ENCODE measurements at regions of chr4 and their contacts with region 1.

Region 1: DNA sequence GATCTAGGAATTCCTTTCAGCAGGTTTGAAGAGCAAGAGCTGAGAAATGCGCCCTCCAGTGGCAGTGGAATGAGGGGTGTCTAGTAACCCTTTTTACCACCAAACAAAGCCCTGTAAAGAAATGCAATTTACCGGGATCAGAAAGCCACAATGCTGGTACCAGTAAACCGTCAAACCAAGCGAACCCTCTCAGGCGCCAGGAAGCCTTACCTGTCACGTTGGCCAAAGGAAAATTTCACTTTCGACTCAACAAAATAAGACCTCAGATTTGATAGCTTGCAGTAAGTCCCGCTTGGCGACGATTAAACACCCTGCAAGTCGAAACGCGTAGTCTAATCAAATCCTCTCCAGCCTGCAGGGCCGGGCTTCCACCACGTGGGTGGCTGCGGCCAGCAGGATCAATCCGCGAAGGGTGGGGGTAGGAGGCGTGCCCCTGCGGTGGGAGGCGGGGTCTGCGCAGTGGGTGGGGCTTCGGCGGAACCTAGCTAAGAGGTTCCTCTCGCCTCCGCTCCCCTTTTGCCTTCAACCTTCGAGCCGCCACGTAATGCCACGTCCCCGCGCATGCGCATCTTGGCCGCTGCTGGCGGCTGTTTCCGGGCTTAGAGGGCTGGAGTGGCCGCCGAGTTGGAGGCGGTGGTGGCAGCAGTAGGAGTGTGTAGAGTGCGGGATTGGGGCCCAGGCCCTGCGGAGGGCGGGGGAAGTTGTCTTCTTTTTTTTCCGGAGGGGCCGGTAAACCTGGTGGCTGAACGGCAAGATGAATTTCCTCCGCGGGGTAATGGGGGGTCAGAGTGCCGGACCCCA is at the start of gene USO1:
- DNase-seq: peak; percentile 96
- ATAC-seq: peak; percentile 86
- H3K4me3 ChIP-seq: peak within 1 kb of the TSS; percentile 76 to 87 (median 83)
- H3K27ac ChIP-seq: peak within 1 kb of the TSS; percentile 98
- H3K4me1 ChIP-seq: peaks cover 53% of the 10 kb centered on the region
- H3K27me3 ChIP-seq: no peaks in the 10 kb centered on the region; a peak in 1 of 5 replicates
- CTCF ChIP-seq: peak; percentile 79
- EP300 ChIP-seq: peak in 1 of 2 experiments; percentile 22; a peak in 1 of 4 replicates
- POLR2A ChIP-seq: peak; percentile 85 to 89
- RAD21 ChIP-seq: peak; percentile 49; the same call in 1 of the 2 replicates
- total RNA-seq, gene USO1: 87.7 and 111 TPM in 2 replicates

Region 2: DNA sequence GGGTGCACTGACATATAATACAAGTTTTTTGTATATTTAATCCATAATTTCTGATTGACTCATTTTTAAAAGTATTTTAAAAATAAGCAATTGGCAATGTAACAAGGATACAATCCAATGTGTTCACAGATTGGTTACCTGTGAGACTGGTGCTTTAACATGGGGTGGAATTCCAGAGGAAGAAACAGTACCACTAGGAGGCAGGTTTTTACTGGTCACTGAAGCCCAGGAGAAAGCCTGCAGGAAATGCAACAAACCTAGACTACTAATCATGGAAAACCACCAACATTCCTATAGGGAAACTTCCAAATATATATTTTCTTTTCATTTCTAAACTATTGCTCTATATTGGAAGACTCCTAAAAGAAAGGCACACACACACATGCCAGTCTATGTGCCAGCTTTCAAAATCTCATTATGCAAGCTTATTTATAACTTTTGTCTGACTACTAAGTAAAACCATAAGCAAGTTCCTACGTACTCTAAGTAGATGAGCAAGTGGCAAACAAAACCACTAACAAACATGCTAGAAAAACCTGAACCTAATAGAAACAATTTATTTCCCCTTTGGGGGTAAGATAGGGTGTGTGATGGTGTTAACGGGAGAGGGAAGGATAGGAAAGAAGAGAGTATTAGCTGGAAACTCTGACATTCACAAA is 70.3 kb before region 1 on chr4:
- CTCF ChIA-PET with region 1: interaction called, 12 read pairs
- POLR2A ChIA-PET with region 1: interaction called, 3 read pairs
- in situ Hi-C with region 1: no loop called
- intact Hi-C with region 1: loop called (anchors 1 kb)
- DNase-seq: peak; percentile 51
- ATAC-seq: peak; percentile 91
- H3K4me3 ChIP-seq: no peak overlapping the region
- H3K27ac ChIP-seq: no peak overlapping the region
- H3K4me1 ChIP-seq: no peaks in the 10 kb centered on the region
- H3K27me3 ChIP-seq: no peaks in the 10 kb centered on the region
- CTCF ChIP-seq: peak; percentile 69
- EP300 ChIP-seq: no peak
- POLR2A ChIP-seq: no peak
- RAD21 ChIP-seq: peak; percentile 57; the same call in 1 of the 2 replicates

Region 3: GRCh38 chr4:75702919-75703411 is 21.3 kb before region 1 on chr4:
- CTCF ChIA-PET with region 1: no interaction called
- POLR2A ChIA-PET with region 1: interaction called, 26 read pairs
- in situ Hi-C with region 1: no loop called
- intact Hi-C with region 1: loop called (anchors 1 kb)
- DNase-seq: peak; percentile 83
- ATAC-seq: peak; percentile 98
- H3K4me3 ChIP-seq: peak overlapping the region; percentile 13 to 53 (median 48)
- H3K27ac ChIP-seq: peak overlapping the region; percentile 62
- H3K4me1 ChIP-seq: peaks cover 31% of the 10 kb centered on the region
- H3K27me3 ChIP-seq: no peaks in the 10 kb centered on the region
- CTCF ChIP-seq: no peak
- EP300 ChIP-seq: peak in 1 of 2 experiments; percentile 31; a peak in 2 of 4 replicates
- POLR2A ChIP-seq: peak; percentile 61 to 84
- RAD21 ChIP-seq: no peak; the same call in 1 of the 2 replicates

Region 4: GRCh38 chr4:75736862-75737261 is 12.6 kb after region 1 on chr4:
- CTCF ChIA-PET with region 1: no interaction called
- POLR2A ChIA-PET with region 1: interaction called, 11 read pairs
- in situ Hi-C with region 1: no loop called
- intact Hi-C with region 1: no loop called
- DNase-seq: no peak
- ATAC-seq: peak; percentile 65
- H3K4me3 ChIP-seq: no peak overlapping the region
- H3K27ac ChIP-seq: peak overlapping the region; percentile 27
- H3K4me1 ChIP-seq: peaks cover 24% of the 10 kb centered on the region
- H3K27me3 ChIP-seq: no peaks in the 10 kb centered on the region
- CTCF ChIP-seq: no peak
- EP300 ChIP-seq: no peak
- POLR2A ChIP-seq: no peak
- RAD21 ChIP-seq: no peak

Region 5: GRCh38 chr4:75849461-75849860 is 125.2 kb after region 1 on chr4:
- CTCF ChIA-PET with region 1: no interaction called
- POLR2A ChIA-PET with region 1: interaction called, 5 read pairs
- in situ Hi-C with region 1: no loop called
- intact Hi-C with region 1: loop called (anchors 5 kb)
- DNase-seq: no peak
- ATAC-seq: peak; percentile 79
- H3K4me3 ChIP-seq: peak overlapping the region in 1 of 3 experiments; percentile 25; a peak in 1 of 6 replicates
- H3K27ac ChIP-seq: no peak overlapping the region
- H3K4me1 ChIP-seq: peaks cover 33% of the 10 kb centered on the region
- H3K27me3 ChIP-seq: no peaks in the 10 kb centered on the region; a peak in 1 of 5 replicates
- CTCF ChIP-seq: 0 out of 2 replicates have a peak, but pooled peaks have one; percentile 22
- EP300 ChIP-seq: no peak
- POLR2A ChIP-seq: no peak
- RAD21 ChIP-seq: no peak

Measured in HepG2 (cell line).